PC-9 (cell line): ENCODE measurements at regions of chr6 and their contacts with region 1.

Region 1: GRCh38 chr6:1958257-1958656 is 287.1 kb downstream of the GMDS start:
- DNase-seq: no peak
- H3K4me3 ChIP-seq: no peak overlapping the region
- H3K27ac ChIP-seq: no peak overlapping the region
- H3K4me1 ChIP-seq: peaks cover 7% of the 10 kb centered on the region
- H3K27me3 ChIP-seq: no peaks in the 10 kb centered on the region
- CTCF ChIP-seq: no peak

Region 2: GRCh38 chr6:1984346-1984994 is 26.2 kb after region 1 on chr6:
- CTCF ChIA-PET with region 1: no interaction called
- POLR2A ChIA-PET with region 1: interaction called, 20 read pairs
- intact Hi-C with region 1: no loop called
- DNase-seq: no peak
- H3K4me3 ChIP-seq: no peak overlapping the region
- H3K27ac ChIP-seq: no peak overlapping the region
- H3K4me1 ChIP-seq: no peaks in the 10 kb centered on the region; the same call in 1 of the 2 replicates
- H3K27me3 ChIP-seq: no peaks in the 10 kb centered on the region
- CTCF ChIP-seq: no peak

Region 3: GRCh38 chr6:2037237-2037926 is 79.1 kb after region 1 on chr6:
- CTCF ChIA-PET with region 1: no interaction called
- POLR2A ChIA-PET with region 1: interaction called, 16 read pairs
- intact Hi-C with region 1: no loop called
- DNase-seq: no peak
- H3K4me3 ChIP-seq: no peak overlapping the region
- H3K27ac ChIP-seq: no peak overlapping the region
- H3K4me1 ChIP-seq: no peaks in the 10 kb centered on the region
- H3K27me3 ChIP-seq: no peaks in the 10 kb centered on the region
- CTCF ChIP-seq: no peak